ENCODE measurements at regions of chrX and their contacts with region 1.

Region 1: GRCh38 chrX:127038065-127038464 is 218.5 kb downstream of the PRR32 start:
- DNase-seq: no peak
- H3K4me3 ChIP-seq: no peak overlapping the region
- H3K27ac ChIP-seq: no peak overlapping the region
- H3K4me1 ChIP-seq: no peaks in the 10 kb centered on the region
- H3K27me3 ChIP-seq: no peaks in the 10 kb centered on the region
- CTCF ChIP-seq: peak; percentile 19 to 58 (median 56)
- POLR2A ChIP-seq: no peak

Region 2: DNA sequence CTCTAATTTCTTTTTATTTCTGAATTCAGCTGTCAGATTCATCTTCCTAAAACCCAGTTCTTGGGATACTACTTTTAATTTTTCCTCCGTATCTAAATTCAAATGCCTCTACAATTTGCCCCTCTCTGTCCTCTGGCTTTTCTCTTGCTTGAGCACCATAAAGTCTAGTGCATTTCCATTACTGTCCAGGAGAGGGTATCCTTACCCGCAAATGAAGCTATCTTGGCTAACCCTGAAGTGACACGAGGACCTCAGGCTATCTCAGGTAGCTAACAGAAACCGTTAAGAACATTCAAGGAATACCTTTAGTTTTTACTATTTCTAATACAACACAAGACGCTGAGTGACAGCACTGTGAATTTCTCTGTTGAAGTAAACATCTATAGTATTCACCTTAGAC is 267.9 kb before region 1 on chrX:
- intact Hi-C with region 1: loop called in 1 of 2 experiments (anchors 10 kb)
- DNase-seq: peak in 5 of 7 donors; percentile 12 to 49 (median 16)
- H3K4me3 ChIP-seq: no peak overlapping the region
- H3K27ac ChIP-seq: no peak overlapping the region
- H3K4me1 ChIP-seq: no peaks in the 10 kb centered on the region
- H3K27me3 ChIP-seq: peaks cover 8% of the 10 kb centered on the region
- CTCF ChIP-seq: peak; percentile 57 to 76 (median 62)
- POLR2A ChIP-seq: no peak